A673 (cell line): ENCODE measurements at regions of chr3 and their contacts with region 1.

Region 1: GRCh38 chr3:153305189-153305588 is 143.2 kb downstream of the RAP2B start:
- DNase-seq: no peak
- H3K4me3 ChIP-seq: no peak overlapping the region
- H3K27ac ChIP-seq: no peak overlapping the region
- H3K4me1 ChIP-seq: no peaks in the 10 kb centered on the region
- H3K27me3 ChIP-seq: no peaks in the 10 kb centered on the region
- CTCF ChIP-seq: no peak

Region 2: DNA sequence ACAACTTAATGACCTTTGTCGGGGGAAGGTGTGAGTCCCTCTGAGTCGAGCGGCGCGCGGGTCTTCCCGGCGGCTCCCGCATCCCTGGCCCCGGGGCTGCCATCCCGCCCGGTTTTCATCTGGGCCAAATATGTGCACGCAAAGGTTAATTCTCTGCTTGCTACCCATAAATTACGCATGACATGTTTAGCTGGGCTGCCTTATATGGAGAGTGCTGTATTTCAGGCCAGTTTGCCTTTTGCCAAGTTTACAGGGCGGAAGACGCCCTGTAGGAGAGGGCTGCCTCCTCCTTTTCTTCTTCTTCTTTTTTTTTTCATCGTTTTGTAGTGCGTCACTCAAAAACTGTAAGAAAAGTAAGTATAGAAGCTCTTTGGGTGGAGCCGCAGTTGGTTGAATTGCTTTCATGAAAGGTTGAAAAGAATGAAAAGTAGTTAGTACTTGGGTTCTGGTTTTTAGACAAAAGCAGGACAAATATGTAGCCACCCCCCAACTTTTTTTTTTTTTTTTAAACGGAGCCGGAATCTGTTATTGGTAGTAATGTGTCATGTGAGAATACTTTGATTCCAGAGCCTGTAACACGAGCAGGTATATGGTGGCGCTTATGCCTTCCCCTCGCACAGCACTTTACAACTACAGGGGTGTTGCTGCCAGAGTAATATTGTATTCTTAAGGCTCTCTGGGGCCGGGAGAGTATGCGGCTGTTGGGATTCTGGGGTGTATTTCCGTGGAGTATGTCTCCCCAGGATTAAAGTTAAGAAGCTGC is 1035.6 kb before region 1 on chr3:
- CTCF ChIA-PET with region 1: no interaction called
- POLR2A ChIA-PET with region 1: interaction called, 12 read pairs
- intact Hi-C with region 1: no loop called
- DNase-seq: peak; percentile 76
- H3K4me3 ChIP-seq: peak overlapping the region; percentile 82
- H3K27ac ChIP-seq: peak overlapping the region; percentile 93
- H3K4me1 ChIP-seq: peaks cover 23% of the 10 kb centered on the region
- H3K27me3 ChIP-seq: no peaks in the 10 kb centered on the region
- CTCF ChIP-seq: no peak